ENCODE measurements at regions of chr2 and their contacts with region 1.

Region 1: GRCh38 chr2:231104115-231104713 is 20.6 kb downstream of the HTR2B start:
- DNase-seq: peak in 1 of 2 donors; percentile 71
- ATAC-seq: peak; percentile 61

Region 2: GRCh38 chr2:230925879-230926765 is 178.1 kb before region 1 on chr2:
- intact Hi-C with region 1: no loop called
- DNase-seq: no peak
- ATAC-seq: peak; percentile 43

Region 3: DNA sequence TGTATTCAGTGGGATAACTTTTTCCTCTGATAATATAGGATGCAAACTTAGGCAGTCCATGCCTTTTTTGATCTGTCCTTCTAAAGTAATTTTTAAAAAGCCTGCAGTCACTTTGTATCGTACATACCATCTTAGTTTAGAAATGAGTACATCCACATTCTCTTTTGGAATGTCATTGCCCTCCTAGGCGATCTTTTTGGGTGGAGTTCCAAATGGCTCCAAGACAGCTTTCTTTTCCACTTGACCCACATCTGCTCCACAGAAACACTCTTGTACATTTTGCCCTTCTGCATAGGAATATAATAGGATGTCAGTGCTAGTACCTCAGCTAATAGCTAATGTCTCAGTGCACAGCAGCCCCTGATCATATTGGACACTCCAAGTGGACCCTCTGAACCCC is 42.5 kb after region 1 on chr2:
- intact Hi-C with region 1: no loop called
- DNase-seq: no peak
- ATAC-seq: no peak

Region 4: GRCh38 chr2:231198291-231199173 is 94.3 kb after region 1 on chr2 and contains the start of gene ARMC9:
- intact Hi-C with region 1: loop called in 1 of 2 experiments (anchors 10 kb)
- DNase-seq: peak; percentile 61 to 82
- ATAC-seq: peak; percentile 99
- total RNA-seq, gene ARMC9: 9.4 to 13.6 TPM

Measured in left colon (tissue), 2 donors.